ENCODE measurements at regions of chr22 and their contacts with region 1.

Region 1: GRCh38 chr22:43036282-43036829 is 21.4 kb upstream of the PACSIN2 start:
- DNase-seq: peak in 1 of 2 donors; percentile 73
- H3K4me3 ChIP-seq: no peak overlapping the region
- H3K27ac ChIP-seq: peak overlapping the region in 1 of 2 donors; percentile 40
- H3K4me1 ChIP-seq: no peaks in the 10 kb centered on the region
- H3K27me3 ChIP-seq: no peaks in the 10 kb centered on the region
- CTCF ChIP-seq: no peak

Region 2: GRCh38 chr22:42780070-42780540 is 256.3 kb before region 1 on chr22:
- intact Hi-C with region 1: loop called (anchors 10 kb)
- DNase-seq: no peak
- H3K4me3 ChIP-seq: no peak overlapping the region
- H3K27ac ChIP-seq: no peak overlapping the region
- H3K4me1 ChIP-seq: peaks cover 0 to 2% of the 10 kb centered on the region in 2 donors
- H3K27me3 ChIP-seq: no peaks in the 10 kb centered on the region
- CTCF ChIP-seq: peak; percentile 77 to 85 (median 82)

Region 3: DNA sequence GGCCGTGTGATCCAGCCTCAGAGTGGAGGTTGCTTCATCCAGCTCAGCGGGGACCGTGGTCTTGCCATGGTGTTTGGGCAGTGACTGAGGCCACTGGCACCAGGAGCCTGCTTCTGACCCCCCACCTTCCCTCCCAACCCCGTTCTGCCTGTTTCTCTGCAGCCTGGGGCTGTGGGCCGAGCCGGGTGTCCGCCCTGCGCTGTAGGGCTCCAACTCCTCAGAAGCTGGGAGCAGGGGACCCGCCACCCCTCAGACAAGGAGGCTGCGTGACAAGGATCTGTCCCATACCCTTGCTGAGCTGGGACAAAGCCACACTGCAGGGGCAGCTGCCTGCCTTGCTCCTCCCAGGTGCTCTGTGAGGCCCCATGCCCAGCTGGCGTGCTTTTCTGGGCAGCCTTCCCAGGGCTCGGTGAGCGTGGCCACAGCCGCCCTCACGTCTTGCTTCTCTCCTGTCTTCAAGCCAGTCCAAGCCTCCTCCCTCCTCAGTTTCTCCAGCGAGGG is 167.6 kb before region 1 on chr22:
- intact Hi-C with region 1: loop called (anchors 5 kb)
- DNase-seq: peak; percentile 49 to 82
- H3K4me3 ChIP-seq: peak overlapping the region in 1 of 2 donors; percentile 22
- H3K27ac ChIP-seq: peak overlapping the region; percentile 71 to 73
- H3K4me1 ChIP-seq: peaks cover 10 to 15% of the 10 kb centered on the region in 2 donors
- H3K27me3 ChIP-seq: no peaks in the 10 kb centered on the region
- CTCF ChIP-seq: no peak

Region 4: DNA sequence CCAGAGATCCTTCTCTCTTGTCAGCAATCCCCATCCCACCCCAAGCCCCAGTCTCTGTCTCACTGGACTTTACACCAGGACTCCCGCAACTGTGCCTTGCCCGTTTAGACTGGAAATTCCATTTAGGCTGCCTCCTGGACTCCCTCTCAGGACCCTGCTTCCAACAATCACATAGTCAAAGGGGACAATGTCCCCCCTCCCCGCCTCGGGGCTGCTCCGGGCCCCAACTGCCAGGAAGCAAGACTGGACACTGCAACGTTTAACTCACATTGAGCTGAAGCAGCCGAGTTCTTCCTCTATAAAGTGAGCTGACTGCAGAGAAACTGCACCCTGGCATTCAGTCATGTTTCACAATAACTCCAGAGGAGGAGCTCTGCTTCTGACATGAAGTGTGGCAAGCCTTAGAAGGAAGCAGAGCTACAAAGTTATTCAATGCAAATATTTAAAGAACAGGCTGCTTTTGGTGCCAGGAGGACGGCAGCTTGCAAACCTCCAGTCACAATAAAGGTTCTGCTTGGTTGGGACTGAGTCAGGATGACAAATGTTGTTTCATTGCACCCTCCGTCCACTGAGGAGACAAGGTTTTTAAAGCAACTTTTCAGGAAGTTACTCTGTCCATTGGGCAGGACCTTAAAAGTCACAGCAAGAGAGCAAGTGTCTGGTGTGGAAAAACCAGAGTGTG is 41.3 kb before region 1 on chr22:
- intact Hi-C with region 1: loop called (anchors 5 kb)
- DNase-seq: peak in 1 of 2 donors; percentile 92
- H3K4me3 ChIP-seq: peak overlapping the region; percentile 51 to 64
- H3K27ac ChIP-seq: peak overlapping the region; percentile 93
- H3K4me1 ChIP-seq: peaks cover 38 to 86% of the 10 kb centered on the region in 2 donors
- H3K27me3 ChIP-seq: no peaks in the 10 kb centered on the region
- CTCF ChIP-seq: no peak

Region 5: DNA sequence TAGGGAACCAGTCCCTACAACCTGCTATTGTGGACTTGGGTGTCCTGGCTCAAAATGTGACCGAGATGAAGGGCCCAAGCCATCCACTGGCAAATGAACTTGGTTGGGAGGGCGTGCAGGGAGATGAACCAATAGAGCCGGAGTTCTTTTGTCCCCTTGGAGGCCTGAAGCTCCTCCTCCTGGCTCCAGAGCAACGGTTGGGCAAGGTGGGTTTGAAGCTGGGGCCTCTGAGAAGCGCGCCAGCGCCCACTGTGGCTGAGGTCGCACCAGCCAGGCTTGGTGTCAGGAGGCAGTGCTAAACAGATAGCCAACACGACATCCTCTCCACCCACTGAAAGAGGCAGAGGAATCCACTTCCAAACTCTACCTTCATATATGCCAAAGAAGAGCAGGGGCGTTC is 14.6 kb after region 1 on chr22:
- intact Hi-C with region 1: no loop called
- DNase-seq: no peak
- H3K4me3 ChIP-seq: no peak overlapping the region
- H3K27ac ChIP-seq: no peak overlapping the region
- H3K4me1 ChIP-seq: no peaks in the 10 kb centered on the region
- H3K27me3 ChIP-seq: no peaks in the 10 kb centered on the region
- CTCF ChIP-seq: no peak

Region 6: GRCh38 chr22:43230971-43231723 is 194.8 kb after region 1 on chr22:
- intact Hi-C with region 1: no loop called
- DNase-seq: no peak
- H3K4me3 ChIP-seq: no peak overlapping the region
- H3K27ac ChIP-seq: no peak overlapping the region
- H3K4me1 ChIP-seq: no peaks in the 10 kb centered on the region
- H3K27me3 ChIP-seq: peaks cover 5% of the 10 kb centered on the region
- CTCF ChIP-seq: peak; percentile 50 to 84 (median 83)

Measured in ascending aorta (tissue), 2 donors.